ENCODE measurements at regions of chr3 and their contacts with region 1.

Region 1: GRCh38 chr3:99678023-99678422 is 39.6 kb downstream of the COL8A1 start:
- DNase-seq: peak in 1 of 2 donors; percentile 28
- ATAC-seq: peak; percentile 73 to 92 (median 81)
- H3K4me3 ChIP-seq: no peak overlapping the region
- H3K27ac ChIP-seq: peak overlapping the region in 9 of 10 donors; percentile 3 to 74 (median 59)
- H3K4me1 ChIP-seq: peaks cover 0 to 19% (median 4%) of the 10 kb centered on the region in 9 donors
- H3K27me3 ChIP-seq: no peaks in the 10 kb centered on the region
- CTCF ChIP-seq: no peak

Region 2: DNA sequence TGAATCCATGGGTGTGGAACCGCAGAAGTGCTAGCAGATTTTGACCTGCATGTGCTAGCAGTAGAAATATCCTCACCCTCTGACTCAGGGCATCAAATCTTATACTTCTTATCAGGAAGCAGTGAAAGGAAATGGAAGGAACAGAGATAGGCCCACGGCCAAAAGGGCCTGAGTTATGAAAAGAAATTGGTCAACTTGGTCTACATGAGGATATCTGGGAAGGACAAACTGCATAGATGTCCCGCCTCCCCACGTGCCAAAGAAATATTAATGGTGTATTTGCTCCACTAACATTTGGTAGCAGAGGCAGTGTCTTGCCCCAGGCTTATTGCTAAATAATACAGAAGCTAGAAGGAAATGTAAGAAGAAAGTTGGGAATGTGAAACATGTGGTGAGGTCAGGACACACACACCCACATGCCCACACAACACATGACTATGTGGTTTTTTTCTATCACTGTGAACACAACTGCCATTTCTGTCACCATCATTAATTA is 133.2 kb before region 1 on chr3:
- intact Hi-C with region 1: loop called in 1 of 10 experiments (anchors 10 kb)
- DNase-seq: peak in 1 of 2 donors; percentile 47
- ATAC-seq: peak in 7 of 8 donors; percentile 59 to 77 (median 72)
- H3K4me3 ChIP-seq: no peak overlapping the region
- H3K27ac ChIP-seq: peak overlapping the region; percentile 11 to 78 (median 68)
- H3K4me1 ChIP-seq: peaks cover 3 to 73% (median 43%) of the 10 kb centered on the region in 9 donors
- H3K27me3 ChIP-seq: no peaks in the 10 kb centered on the region
- CTCF ChIP-seq: no peak